ENCODE measurements at regions of chr1 and their contacts with region 1.

Region 1: DNA sequence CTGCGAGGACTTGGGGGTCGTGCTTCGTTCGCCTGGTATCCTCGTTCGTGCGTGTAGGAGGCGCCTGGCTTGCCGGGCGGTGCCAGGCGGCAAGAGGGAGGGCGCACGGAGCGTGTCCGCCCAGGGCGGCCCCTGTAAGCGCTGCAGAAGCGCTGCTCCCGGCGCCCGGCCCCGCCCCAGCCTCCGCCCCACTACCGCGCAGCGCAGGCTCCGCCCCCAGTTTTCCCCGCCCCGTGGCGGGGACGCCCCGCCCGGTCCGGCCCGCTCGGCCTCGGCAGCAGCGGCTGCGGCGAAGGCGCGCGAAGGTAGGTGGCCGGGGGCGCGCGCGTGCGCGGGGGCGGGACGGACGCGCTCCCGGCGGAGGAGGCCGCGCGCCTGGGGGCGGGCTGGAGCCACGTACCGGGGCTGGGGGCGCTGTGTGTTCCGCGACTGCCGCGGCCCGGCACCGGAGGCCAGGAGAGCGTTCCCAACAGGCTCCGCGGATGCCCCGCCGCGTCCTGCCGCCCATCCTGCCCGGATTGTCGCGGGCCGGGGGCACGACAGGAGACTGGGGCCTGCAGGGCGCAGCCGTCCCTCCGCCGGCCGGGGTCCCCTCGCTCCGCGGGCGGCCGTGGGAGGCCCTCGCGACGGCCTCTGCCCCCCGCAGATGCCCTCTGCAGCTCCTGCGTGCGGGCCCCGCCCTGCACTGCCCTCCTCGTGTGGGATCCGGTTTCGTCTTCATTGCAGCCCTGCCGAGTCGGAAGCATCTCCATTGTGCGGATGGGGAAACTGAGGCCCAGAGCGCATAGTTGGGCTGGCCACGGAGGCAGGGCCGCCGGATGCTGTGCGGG is 7.7 kb upstream of the CROCC start:
- DNase-seq: peak; percentile 93
- H3K4me3 ChIP-seq: peak overlapping the region; percentile 74
- H3K27ac ChIP-seq: no peak overlapping the region
- H3K4me1 ChIP-seq: peaks cover 11% of the 10 kb centered on the region
- CTCF ChIP-seq: 0 out of 2 replicates have a peak, but pooled peaks have one; percentile 22

Region 2: DNA sequence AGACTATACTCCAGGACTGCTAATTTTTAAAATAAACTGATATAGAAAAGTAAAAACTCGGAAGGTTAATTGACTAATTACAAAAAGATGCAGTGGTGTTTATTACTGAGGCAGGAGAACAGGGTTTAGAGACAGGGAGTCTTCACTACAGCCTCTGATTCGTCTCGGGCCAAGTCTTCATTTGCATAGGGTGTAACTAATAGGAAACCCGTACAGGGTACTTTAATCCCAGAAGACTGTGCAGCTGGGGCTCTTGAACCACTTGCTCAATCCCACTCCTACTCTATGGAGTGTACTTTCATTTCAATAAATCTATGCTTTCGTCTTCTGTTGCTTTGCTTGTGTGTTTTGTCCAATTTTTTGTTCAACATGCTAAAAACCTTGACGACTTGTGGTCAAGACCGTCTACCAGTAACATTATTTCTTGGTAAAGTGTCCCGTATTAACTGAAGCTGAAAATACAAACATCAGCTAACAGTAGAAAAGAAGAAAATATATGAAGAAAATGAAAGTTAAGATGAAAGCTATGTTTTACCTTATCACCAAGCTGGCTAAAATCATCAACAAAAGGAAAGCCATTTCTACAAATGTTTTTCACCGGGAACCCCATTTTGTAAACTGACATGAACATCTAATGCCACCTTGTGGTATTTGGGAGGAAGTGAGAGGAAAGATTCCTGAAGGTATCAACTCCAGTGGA is 131.7 kb after region 1 on chr1:
- CTCF ChIA-PET with region 1: no interaction called
- POLR2A ChIA-PET with region 1: no interaction called
- intact Hi-C with region 1: loop called (anchors 5 kb)
- DNase-seq: peak; percentile 64
- H3K4me3 ChIP-seq: peak overlapping the region; percentile 10
- H3K27ac ChIP-seq: no peak overlapping the region
- H3K4me1 ChIP-seq: peaks cover 6% of the 10 kb centered on the region
- CTCF ChIP-seq: peak; percentile 90